Panc1 (cell line): ENCODE measurements at regions of chr14 and their contacts with region 1.

Region 1: GRCh38 chr14:69948351-69948750 is 69.1 kb downstream of the SMOC1 start:
- DNase-seq: no peak
- ATAC-seq: no peak
- H3K4me3 ChIP-seq: no peak overlapping the region
- H3K27ac ChIP-seq: no peak overlapping the region
- H3K4me1 ChIP-seq: no peaks in the 10 kb centered on the region
- H3K27me3 ChIP-seq: 0 out of 2 replicates have a peak, but pooled peaks cover 2% of the 10 kb centered on the region
- CTCF ChIP-seq: no peak

Region 2: DNA sequence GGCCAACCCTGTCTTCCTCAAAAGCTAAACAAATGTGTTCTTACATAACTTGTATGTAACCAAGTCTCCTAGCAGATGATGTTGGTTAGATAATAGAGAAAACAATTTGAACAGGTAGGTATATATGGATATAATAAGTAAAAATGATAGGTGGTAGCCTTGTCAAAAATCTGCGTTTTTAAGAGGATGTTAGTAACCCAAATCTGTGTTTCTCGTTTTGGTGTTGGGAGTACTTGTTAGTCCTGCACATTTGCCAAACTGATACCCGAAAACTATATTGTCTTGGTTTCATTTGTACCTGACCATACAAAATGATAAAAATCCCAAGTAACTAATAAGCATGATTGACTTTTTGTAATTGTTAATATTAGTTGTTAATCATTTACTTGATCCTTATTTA is 173.3 kb before region 1 on chr14:
- CTCF ChIA-PET with region 1: no interaction called
- POLR2A ChIA-PET with region 1: interaction called, 14 read pairs
- in situ Hi-C with region 1: no loop called
- intact Hi-C with region 1: no loop called
- DNase-seq: no peak
- ATAC-seq: no peak
- H3K4me3 ChIP-seq: no peak overlapping the region
- H3K27ac ChIP-seq: no peak overlapping the region
- H3K4me1 ChIP-seq: no peaks in the 10 kb centered on the region
- H3K27me3 ChIP-seq: no peaks in the 10 kb centered on the region
- CTCF ChIP-seq: no peak